ENCODE measurements at regions of chr1 and their contacts with region 1.

Region 1: GRCh38 chr1:115041654-115042053 is 12.0 kb downstream of the TSHB start:
- DNase-seq: peak in 1 of 2 experiments; percentile 37
- H3K4me3 ChIP-seq: no peak overlapping the region
- H3K4me3 Mint-ChIP-seq: no peak overlapping the region
- H3K27ac Mint-ChIP-seq: no peak overlapping the region
- H3K4me1 ChIP-seq: peaks cover 21% of the 10 kb centered on the region
- H3K4me1 Mint-ChIP-seq: no peaks in the 10 kb centered on the region
- H3K27me3 ChIP-seq: no peaks in the 10 kb centered on the region
- H3K27me3 Mint-ChIP-seq: no peaks in the 10 kb centered on the region
- CTCF ChIP-seq: peak; percentile 48 to 54

Region 2: GRCh38 chr1:114979278-114979891 is 62.3 kb before region 1 on chr1:
- CTCF ChIA-PET with region 1: interaction called, 6 read pairs
- POLR2A ChIA-PET with region 1: no interaction called
- intact Hi-C with region 1: loop called (anchors 1 kb)
- DNase-seq: peak; percentile 49 to 60
- H3K4me3 ChIP-seq: no peak overlapping the region
- H3K4me3 Mint-ChIP-seq: no peak overlapping the region
- H3K27ac Mint-ChIP-seq: no peak overlapping the region
- H3K4me1 ChIP-seq: no peaks in the 10 kb centered on the region
- H3K4me1 Mint-ChIP-seq: no peaks in the 10 kb centered on the region
- H3K27me3 ChIP-seq: no peaks in the 10 kb centered on the region
- H3K27me3 Mint-ChIP-seq: no peaks in the 10 kb centered on the region
- CTCF ChIP-seq: peak; percentile 42 to 54

Region 3: DNA sequence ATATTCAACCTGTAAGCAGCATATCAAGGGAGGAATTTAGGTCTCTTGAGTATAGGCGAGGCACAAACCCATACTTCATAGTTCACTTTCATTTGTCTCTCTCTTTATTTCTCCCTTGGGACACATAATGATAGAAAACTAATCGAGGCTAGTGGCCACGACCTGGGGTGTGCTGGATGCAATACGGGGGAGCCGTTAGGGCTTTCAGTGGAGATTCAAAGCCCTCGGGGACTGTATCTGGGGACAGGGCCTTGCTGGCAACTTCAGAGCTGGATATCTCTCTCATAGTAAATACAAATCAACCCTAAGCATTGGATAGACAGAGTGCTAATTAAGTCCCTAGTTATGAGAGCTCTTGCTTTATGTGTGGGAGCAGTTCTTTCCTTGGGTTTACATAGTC is 897.8 kb after region 1 on chr1:
- CTCF ChIA-PET with region 1: no interaction called
- POLR2A ChIA-PET with region 1: no interaction called
- intact Hi-C with region 1: no loop called
- DNase-seq: no peak
- H3K4me3 ChIP-seq: no peak overlapping the region
- H3K4me3 Mint-ChIP-seq: no peak overlapping the region
- H3K27ac Mint-ChIP-seq: no peak overlapping the region
- H3K4me1 ChIP-seq: no peaks in the 10 kb centered on the region
- H3K4me1 Mint-ChIP-seq: no peaks in the 10 kb centered on the region
- H3K27me3 ChIP-seq: no peaks in the 10 kb centered on the region
- H3K27me3 Mint-ChIP-seq: peaks cover 8% of the 10 kb centered on the region
- CTCF ChIP-seq: no peak